PC-3 (cell line): ENCODE measurements at regions of chr14 and their contacts with region 1.

Region 1: GRCh38 chr14:50937325-50937724 is 7.0 kb downstream of the PYGL start:
- DNase-seq: peak; percentile 73
- ATAC-seq: peak; percentile 18; the same call in 1 of the 2 replicates
- H3K4me3 ChIP-seq: no peak overlapping the region
- H3K27ac ChIP-seq: no peak overlapping the region
- H3K4me1 ChIP-seq: peaks cover 30% of the 10 kb centered on the region
- H3K27me3 ChIP-seq: no peaks in the 10 kb centered on the region
- CTCF ChIP-seq: no peak

Region 2: GRCh38 chr14:50901361-50901760 is 36.0 kb before region 1 on chr14:
- CTCF ChIA-PET with region 1: no interaction called
- POLR2A ChIA-PET with region 1: no interaction called
- intact Hi-C with region 1: loop called (anchors 5 kb)
- DNase-seq: no peak
- ATAC-seq: no peak
- H3K4me3 ChIP-seq: no peak overlapping the region
- H3K27ac ChIP-seq: no peak overlapping the region
- H3K4me1 ChIP-seq: peaks cover 10% of the 10 kb centered on the region; the same call in 1 of the 2 replicates
- H3K27me3 ChIP-seq: no peaks in the 10 kb centered on the region
- CTCF ChIP-seq: no peak